PC-9 (cell line): ENCODE measurements at regions of chr3 and their contacts with region 1.

Region 1: DNA sequence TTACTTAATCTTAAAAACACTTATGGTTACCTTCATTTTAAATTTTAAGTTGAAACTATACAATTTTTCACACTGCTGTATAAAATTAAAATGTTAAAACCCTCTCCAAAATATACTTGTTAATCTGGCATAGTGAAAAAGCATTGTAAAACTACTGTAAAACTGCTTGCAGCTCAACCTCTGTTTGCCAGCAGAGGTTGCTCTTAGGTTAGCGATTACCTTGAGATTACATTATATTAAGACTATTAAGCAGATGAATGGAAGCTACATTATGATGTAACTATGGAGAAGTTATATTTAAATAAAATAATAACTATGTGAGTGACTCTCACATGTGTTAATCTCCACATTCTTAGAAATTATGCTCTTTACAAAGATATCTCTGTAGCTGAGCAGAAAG is 143.6 kb upstream of the SLITRK3 start:
- DNase-seq: no peak
- H3K4me3 ChIP-seq: no peak overlapping the region
- H3K27ac ChIP-seq: no peak overlapping the region
- H3K4me1 ChIP-seq: no peaks in the 10 kb centered on the region
- H3K27me3 ChIP-seq: no peaks in the 10 kb centered on the region
- CTCF ChIP-seq: peak; percentile 64

Region 2: GRCh38 chr3:165196577-165197480 is 142.9 kb before region 1 on chr3:
- CTCF ChIA-PET with region 1: no interaction called
- POLR2A ChIA-PET with region 1: no interaction called
- intact Hi-C with region 1: no loop called
- DNase-seq: no peak
- H3K4me3 ChIP-seq: no peak overlapping the region
- H3K27ac ChIP-seq: no peak overlapping the region
- H3K4me1 ChIP-seq: no peaks in the 10 kb centered on the region
- H3K27me3 ChIP-seq: no peaks in the 10 kb centered on the region
- CTCF ChIP-seq: no peak

Region 3: DNA sequence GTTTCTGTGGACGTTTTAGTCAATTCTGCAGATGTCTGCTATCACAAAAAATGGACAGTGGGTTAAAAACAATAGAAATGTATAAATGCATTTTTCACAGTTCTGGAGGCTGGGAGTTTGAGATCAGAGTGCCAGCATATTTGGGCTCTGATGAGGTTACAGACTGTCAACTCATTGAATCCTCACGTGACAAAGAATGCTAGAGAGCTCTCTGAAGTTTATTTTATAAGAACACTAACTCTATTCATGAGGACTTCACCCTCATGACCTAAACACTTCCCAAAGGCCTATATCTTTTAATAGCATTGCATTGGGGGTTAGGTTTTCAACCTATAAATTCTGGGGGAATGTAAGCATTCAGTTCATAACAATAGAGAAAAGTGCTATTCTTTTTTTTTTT is 39.0 kb after region 1 on chr3:
- CTCF ChIA-PET with region 1: no interaction called
- POLR2A ChIA-PET with region 1: no interaction called
- intact Hi-C with region 1: no loop called
- DNase-seq: no peak
- H3K4me3 ChIP-seq: no peak overlapping the region
- H3K27ac ChIP-seq: no peak overlapping the region
- H3K4me1 ChIP-seq: no peaks in the 10 kb centered on the region
- H3K27me3 ChIP-seq: no peaks in the 10 kb centered on the region
- CTCF ChIP-seq: no peak

Region 4: DNA sequence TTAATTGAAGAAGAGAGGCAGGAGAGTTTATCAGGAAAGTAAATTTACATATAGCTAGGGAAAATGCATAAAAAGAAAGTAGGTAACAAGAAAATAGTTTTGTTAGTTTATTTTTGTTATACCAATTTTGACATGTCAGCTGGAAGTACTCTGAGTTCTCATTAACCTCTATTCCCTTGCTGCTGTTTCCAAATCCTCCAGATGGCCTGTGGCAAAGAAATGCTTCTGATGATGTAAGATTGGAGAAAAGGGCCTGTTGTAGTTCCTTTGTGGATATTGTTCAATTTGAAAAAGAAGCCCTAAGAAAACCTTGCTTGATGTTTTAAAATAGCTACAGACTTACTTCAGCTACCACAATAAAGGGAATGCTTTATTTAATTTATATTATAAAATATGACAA is 49.3 kb after region 1 on chr3:
- CTCF ChIA-PET with region 1: interaction called, 10 read pairs
- POLR2A ChIA-PET with region 1: no interaction called
- intact Hi-C with region 1: no loop called
- DNase-seq: no peak
- H3K4me3 ChIP-seq: no peak overlapping the region
- H3K27ac ChIP-seq: no peak overlapping the region
- H3K4me1 ChIP-seq: no peaks in the 10 kb centered on the region
- H3K27me3 ChIP-seq: no peaks in the 10 kb centered on the region
- CTCF ChIP-seq: no peak

Region 5: DNA sequence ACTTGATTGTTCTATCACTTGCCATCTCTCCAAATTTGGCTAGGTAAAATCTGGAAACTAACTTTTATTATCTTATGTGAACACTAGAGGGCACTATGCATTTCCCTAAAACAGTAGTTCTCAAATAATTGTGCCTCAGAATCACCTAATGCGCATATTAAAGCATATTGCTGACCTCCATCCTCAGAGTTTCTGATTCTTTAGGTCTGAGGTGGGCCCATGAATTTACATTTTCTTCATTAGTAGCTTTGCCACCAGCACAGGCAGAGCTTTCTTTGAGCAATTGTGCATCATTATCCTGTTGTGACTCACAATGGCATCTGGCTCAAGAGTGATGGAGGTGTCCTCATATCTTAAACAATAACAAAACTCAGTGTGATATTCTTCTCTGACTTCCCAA is 514.9 kb after region 1 on chr3:
- CTCF ChIA-PET with region 1: no interaction called
- POLR2A ChIA-PET with region 1: no interaction called
- intact Hi-C with region 1: loop called (anchors 10 kb)
- DNase-seq: peak; percentile 3 to 42
- H3K4me3 ChIP-seq: no peak overlapping the region
- H3K27ac ChIP-seq: no peak overlapping the region
- H3K4me1 ChIP-seq: no peaks in the 10 kb centered on the region
- H3K27me3 ChIP-seq: no peaks in the 10 kb centered on the region
- CTCF ChIP-seq: peak; percentile 86

Region 6: DNA sequence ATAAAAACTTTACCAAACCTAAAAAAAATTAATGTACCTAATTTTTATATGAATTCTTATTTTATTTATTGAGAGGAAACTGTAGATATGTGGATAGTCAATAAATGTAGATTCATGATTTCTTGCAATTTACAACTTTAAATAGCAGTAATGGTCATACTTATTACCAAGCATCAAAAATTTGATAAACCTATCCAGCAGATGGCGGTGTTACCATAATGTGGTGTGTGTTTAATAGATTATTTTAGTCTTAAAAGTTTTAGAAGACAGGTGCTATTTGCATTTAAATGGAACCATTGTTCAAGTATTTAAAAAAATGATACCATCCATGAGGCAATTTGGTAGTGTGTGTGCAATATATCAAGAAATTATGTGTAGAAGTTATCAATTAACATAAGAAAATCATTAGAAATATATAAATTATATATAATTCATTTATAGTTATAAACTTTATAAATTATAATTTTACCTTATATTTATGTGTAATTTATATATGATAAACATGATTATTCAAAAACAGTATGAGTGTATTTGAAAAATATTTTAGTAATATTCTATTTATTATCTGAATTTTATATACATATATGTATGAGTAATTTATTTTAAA is 673.4 kb after region 1 on chr3:
- CTCF ChIA-PET with region 1: no interaction called
- POLR2A ChIA-PET with region 1: no interaction called
- intact Hi-C with region 1: loop called (anchors 5 kb)
- DNase-seq: peak in 1 of 2 experiments; percentile 11
- H3K4me3 ChIP-seq: no peak overlapping the region
- H3K27ac ChIP-seq: no peak overlapping the region
- H3K4me1 ChIP-seq: no peaks in the 10 kb centered on the region
- H3K27me3 ChIP-seq: no peaks in the 10 kb centered on the region
- CTCF ChIP-seq: peak; percentile 82

Region 7: DNA sequence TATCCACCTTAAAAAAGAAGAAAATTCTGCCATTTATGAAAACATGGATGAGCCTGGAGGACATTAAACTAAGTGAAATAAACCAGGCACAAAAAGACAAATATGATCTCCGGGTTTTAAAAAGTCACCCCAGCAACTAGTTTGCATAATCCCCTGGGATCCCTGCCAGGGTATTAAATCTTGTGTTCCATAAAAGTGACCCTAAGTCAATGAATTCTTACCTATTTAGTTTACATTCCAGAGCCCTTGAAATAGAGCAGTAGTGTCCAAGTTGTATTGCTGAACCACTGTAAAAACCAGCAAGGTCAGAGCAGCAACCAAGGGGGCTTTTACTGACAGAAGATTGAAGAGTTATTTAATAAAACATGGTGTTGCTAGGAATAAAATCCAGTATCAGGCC is 1214.3 kb after region 1 on chr3:
- CTCF ChIA-PET with region 1: no interaction called
- POLR2A ChIA-PET with region 1: no interaction called
- intact Hi-C with region 1: no loop called
- DNase-seq: no peak
- H3K4me3 ChIP-seq: no peak overlapping the region
- H3K27ac ChIP-seq: no peak overlapping the region
- H3K4me1 ChIP-seq: no peaks in the 10 kb centered on the region
- H3K27me3 ChIP-seq: no peaks in the 10 kb centered on the region
- CTCF ChIP-seq: no peak